ENCODE measurements at regions of chr6 and their contacts with region 1.

Region 1: DNA sequence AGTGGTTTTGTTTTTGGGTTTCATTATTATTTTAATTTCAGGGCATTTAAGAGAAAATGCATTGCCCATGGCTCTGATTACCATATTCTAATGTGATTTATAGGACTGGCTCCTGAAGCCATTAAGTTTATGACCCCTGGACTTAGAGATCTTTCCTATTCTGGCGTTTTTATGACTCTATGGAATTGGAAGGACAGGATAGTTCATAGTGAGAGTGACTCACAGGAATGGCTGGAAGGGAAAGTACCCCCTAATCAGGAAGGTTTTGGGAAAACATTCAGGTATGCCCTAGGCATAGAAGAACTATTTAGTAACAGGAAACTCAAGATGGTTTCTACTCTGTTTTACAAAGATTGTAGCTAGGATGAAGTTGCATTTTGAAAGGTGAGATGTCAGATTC is 108.6 kb upstream of the SLC2A12 start:
- DNase-seq: no peak
- ATAC-seq: no peak
- H3K4me3 ChIP-seq: no peak overlapping the region
- H3K4me3 Mint-ChIP-seq: no peak overlapping the region
- H3K27ac ChIP-seq: no peak overlapping the region
- H3K27ac Mint-ChIP-seq: no peak overlapping the region
- H3K4me1 ChIP-seq: no peaks in the 10 kb centered on the region
- H3K4me1 Mint-ChIP-seq: no peaks in the 10 kb centered on the region
- H3K27me3 ChIP-seq: no peaks in the 10 kb centered on the region
- H3K27me3 Mint-ChIP-seq: no peaks in the 10 kb centered on the region
- CTCF ChIP-seq: no peak

Region 2: DNA sequence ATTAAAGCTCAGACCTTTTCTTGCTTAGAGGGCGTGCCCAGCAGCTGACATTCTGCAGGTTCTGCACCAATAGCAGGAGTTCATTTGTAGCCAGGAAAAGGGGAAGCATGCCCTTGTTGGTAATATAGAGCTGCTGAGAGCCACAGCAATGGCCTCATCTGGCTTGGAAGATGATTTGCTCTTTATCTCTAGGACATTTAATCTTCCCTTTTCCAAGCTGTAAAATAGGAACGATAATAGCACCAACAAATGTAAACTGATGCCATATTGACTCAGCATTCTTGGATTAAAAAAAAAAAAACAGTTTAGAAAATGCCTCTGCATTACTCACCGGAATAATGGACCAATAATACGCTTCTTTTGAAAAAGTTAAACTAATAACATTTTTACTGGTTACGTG is 15.2 kb before region 1 on chr6:
- CTCF ChIA-PET with region 1: interaction called, 15 read pairs
- POLR2A ChIA-PET with region 1: no interaction called
- intact Hi-C with region 1: no loop called
- DNase-seq: no peak
- ATAC-seq: no peak
- H3K4me3 ChIP-seq: no peak overlapping the region
- H3K4me3 Mint-ChIP-seq: no peak overlapping the region
- H3K27ac ChIP-seq: no peak overlapping the region
- H3K27ac Mint-ChIP-seq: no peak overlapping the region
- H3K4me1 ChIP-seq: no peaks in the 10 kb centered on the region
- H3K4me1 Mint-ChIP-seq: no peaks in the 10 kb centered on the region
- H3K27me3 ChIP-seq: no peaks in the 10 kb centered on the region
- H3K27me3 Mint-ChIP-seq: no peaks in the 10 kb centered on the region
- CTCF ChIP-seq: no peak

Region 3: DNA sequence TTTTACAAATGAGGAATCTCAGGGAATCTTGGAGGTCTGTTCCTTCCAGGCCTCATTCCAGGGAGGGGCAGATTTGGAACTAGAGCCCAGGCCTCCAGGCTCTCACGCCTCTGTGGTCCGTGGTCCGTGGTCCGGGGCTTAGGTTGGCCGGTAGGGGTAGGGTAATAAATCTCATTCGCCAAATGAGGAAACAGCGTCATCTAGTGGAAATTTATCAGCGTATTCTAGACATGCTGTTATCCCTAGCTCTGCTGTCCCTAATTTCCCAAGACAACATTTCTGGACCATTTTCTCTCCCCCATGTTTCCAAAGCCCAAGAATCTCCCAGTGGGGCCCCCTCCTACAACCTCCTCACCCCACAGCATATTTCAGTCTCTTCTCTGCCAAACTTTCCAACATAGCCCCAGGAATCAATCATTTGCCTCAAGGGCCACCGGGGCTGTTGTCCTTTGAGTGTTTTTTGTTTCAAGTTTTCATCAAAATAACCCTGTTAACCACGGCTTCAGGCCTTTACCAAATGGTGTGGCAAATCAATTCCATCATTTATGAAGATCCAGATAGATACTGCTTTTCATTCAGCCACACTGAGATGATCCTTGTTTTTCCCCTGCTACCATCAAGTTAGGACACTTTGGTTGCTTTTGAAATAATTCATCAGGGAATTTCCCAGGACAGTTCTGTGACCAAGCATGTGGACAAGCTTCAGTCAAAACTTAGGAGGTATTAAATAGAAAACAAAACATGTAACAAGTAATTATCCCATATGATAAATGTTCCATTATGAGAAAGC is 662.1 kb after region 1 on chr6:
- CTCF ChIA-PET with region 1: interaction called, 37 read pairs
- POLR2A ChIA-PET with region 1: no interaction called
- intact Hi-C with region 1: loop called (anchors 1 kb)
- DNase-seq: peak in 4 of 9 experiments; percentile 22 to 74 (median 58)
- ATAC-seq: peak; percentile 61
- H3K4me3 ChIP-seq: no peak overlapping the region
- H3K4me3 Mint-ChIP-seq: no peak overlapping the region
- H3K27ac ChIP-seq: no peak overlapping the region
- H3K27ac Mint-ChIP-seq: no peak overlapping the region
- H3K4me1 ChIP-seq: no peaks in the 10 kb centered on the region
- H3K4me1 Mint-ChIP-seq: peaks cover 4% of the 10 kb centered on the region
- H3K27me3 ChIP-seq: no peaks in the 10 kb centered on the region
- H3K27me3 Mint-ChIP-seq: peaks cover 6% of the 10 kb centered on the region
- CTCF ChIP-seq: peak; percentile 76

Region 4: GRCh38 chr6:134882426-134883038 is 721.5 kb after region 1 on chr6:
- CTCF ChIA-PET with region 1: interaction called, 16 read pairs
- POLR2A ChIA-PET with region 1: no interaction called
- intact Hi-C with region 1: loop called (anchors 1 kb)
- DNase-seq: peak; percentile 5 to 70 (median 32)
- ATAC-seq: peak; percentile 48
- H3K4me3 ChIP-seq: no peak overlapping the region
- H3K4me3 Mint-ChIP-seq: no peak overlapping the region
- H3K27ac ChIP-seq: no peak overlapping the region
- H3K27ac Mint-ChIP-seq: no peak overlapping the region
- H3K4me1 ChIP-seq: no peaks in the 10 kb centered on the region
- H3K4me1 Mint-ChIP-seq: no peaks in the 10 kb centered on the region
- H3K27me3 ChIP-seq: no peaks in the 10 kb centered on the region
- H3K27me3 Mint-ChIP-seq: peaks cover 8% of the 10 kb centered on the region
- CTCF ChIP-seq: peak; percentile 70

Region 5: GRCh38 chr6:135170849-135171248 is 1009.8 kb after region 1 on chr6:
- CTCF ChIA-PET with region 1: no interaction called
- POLR2A ChIA-PET with region 1: no interaction called
- intact Hi-C with region 1: no loop called
- DNase-seq: no peak
- ATAC-seq: no peak
- H3K4me3 ChIP-seq: no peak overlapping the region
- H3K4me3 Mint-ChIP-seq: no peak overlapping the region
- H3K27ac ChIP-seq: no peak overlapping the region
- H3K27ac Mint-ChIP-seq: no peak overlapping the region
- H3K4me1 ChIP-seq: no peaks in the 10 kb centered on the region
- H3K4me1 Mint-ChIP-seq: no peaks in the 10 kb centered on the region
- H3K27me3 ChIP-seq: no peaks in the 10 kb centered on the region
- H3K27me3 Mint-ChIP-seq: no peaks in the 10 kb centered on the region
- CTCF ChIP-seq: no peak

Region 6: GRCh38 chr6:135280375-135281136 is 1119.5 kb after region 1 on chr6:
- CTCF ChIA-PET with region 1: no interaction called
- POLR2A ChIA-PET with region 1: no interaction called
- intact Hi-C with region 1: no loop called
- DNase-seq: no peak
- ATAC-seq: no peak
- H3K4me3 ChIP-seq: no peak overlapping the region
- H3K4me3 Mint-ChIP-seq: no peak overlapping the region
- H3K27ac ChIP-seq: no peak overlapping the region
- H3K27ac Mint-ChIP-seq: no peak overlapping the region
- H3K4me1 ChIP-seq: no peaks in the 10 kb centered on the region
- H3K4me1 Mint-ChIP-seq: no peaks in the 10 kb centered on the region
- H3K27me3 ChIP-seq: no peaks in the 10 kb centered on the region
- H3K27me3 Mint-ChIP-seq: peaks cover 5% of the 10 kb centered on the region
- CTCF ChIP-seq: no peak

Region 7: DNA sequence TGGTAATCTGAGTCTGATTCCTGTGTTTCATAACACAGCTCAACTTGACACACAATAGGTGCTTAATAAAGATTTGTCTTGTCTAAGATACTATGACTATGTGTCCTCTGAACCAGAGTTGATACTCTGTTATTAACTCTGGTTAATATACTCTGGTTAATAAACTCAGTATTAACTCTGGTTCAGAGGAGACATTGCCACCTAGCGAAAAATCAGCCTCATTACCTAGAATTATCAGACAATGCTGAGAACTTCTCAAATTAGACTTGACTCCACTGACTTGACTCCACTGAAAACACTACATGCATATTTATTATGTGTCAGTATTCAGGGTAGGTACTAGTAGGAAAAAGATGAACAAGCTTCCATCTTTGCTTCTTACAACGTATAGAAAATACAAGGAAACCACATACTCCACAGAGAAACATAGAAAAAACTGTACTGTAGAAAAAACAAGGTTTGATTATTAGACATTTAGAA is 1262.7 kb after region 1 on chr6:
- CTCF ChIA-PET with region 1: interaction called, 3 read pairs
- POLR2A ChIA-PET with region 1: no interaction called
- intact Hi-C with region 1: loop called in 1 of 2 experiments (anchors 5 kb)
- DNase-seq: peak in 2 of 9 experiments; percentile 35 to 47
- ATAC-seq: peak; percentile 48
- H3K4me3 ChIP-seq: no peak overlapping the region
- H3K4me3 Mint-ChIP-seq: no peak overlapping the region
- H3K27ac ChIP-seq: no peak overlapping the region
- H3K27ac Mint-ChIP-seq: no peak overlapping the region
- H3K4me1 ChIP-seq: no peaks in the 10 kb centered on the region
- H3K4me1 Mint-ChIP-seq: no peaks in the 10 kb centered on the region
- H3K27me3 ChIP-seq: no peaks in the 10 kb centered on the region
- H3K27me3 Mint-ChIP-seq: no peaks in the 10 kb centered on the region
- CTCF ChIP-seq: peak; percentile 81

Region 8: GRCh38 chr6:135438907-135439535 is 1278.0 kb after region 1 on chr6:
- CTCF ChIA-PET with region 1: interaction called, 3 read pairs
- POLR2A ChIA-PET with region 1: no interaction called
- intact Hi-C with region 1: loop called in 1 of 2 experiments (anchors 5 kb)
- DNase-seq: peak in 2 of 9 experiments; percentile 36 to 53
- ATAC-seq: peak; percentile 42
- H3K4me3 ChIP-seq: no peak overlapping the region
- H3K4me3 Mint-ChIP-seq: no peak overlapping the region
- H3K27ac ChIP-seq: no peak overlapping the region
- H3K27ac Mint-ChIP-seq: no peak overlapping the region
- H3K4me1 ChIP-seq: peaks cover 5% of the 10 kb centered on the region
- H3K4me1 Mint-ChIP-seq: peaks cover 18% of the 10 kb centered on the region
- H3K27me3 ChIP-seq: no peaks in the 10 kb centered on the region
- H3K27me3 Mint-ChIP-seq: no peaks in the 10 kb centered on the region
- CTCF ChIP-seq: peak; percentile 47

Measured in CD8-positive, alpha-beta T cell (primary cell).